Activated T-helper 1 cell treated with anti-CD3 and anti-CD28 coated beads, Interleukin-12 subunit alpha, Interleukin-12 subunit beta, Interleukin-2, Interleukin-4 antibody, amounts not matched to agents 30 ng/mL and 10 ng/mL and 1 ng/mL, durations not matched to agents 14 hours and 24 hours and 36 hours (primary cell): ENCODE measurements at regions of chr5 and their contacts with region 1.

Region 1: DNA sequence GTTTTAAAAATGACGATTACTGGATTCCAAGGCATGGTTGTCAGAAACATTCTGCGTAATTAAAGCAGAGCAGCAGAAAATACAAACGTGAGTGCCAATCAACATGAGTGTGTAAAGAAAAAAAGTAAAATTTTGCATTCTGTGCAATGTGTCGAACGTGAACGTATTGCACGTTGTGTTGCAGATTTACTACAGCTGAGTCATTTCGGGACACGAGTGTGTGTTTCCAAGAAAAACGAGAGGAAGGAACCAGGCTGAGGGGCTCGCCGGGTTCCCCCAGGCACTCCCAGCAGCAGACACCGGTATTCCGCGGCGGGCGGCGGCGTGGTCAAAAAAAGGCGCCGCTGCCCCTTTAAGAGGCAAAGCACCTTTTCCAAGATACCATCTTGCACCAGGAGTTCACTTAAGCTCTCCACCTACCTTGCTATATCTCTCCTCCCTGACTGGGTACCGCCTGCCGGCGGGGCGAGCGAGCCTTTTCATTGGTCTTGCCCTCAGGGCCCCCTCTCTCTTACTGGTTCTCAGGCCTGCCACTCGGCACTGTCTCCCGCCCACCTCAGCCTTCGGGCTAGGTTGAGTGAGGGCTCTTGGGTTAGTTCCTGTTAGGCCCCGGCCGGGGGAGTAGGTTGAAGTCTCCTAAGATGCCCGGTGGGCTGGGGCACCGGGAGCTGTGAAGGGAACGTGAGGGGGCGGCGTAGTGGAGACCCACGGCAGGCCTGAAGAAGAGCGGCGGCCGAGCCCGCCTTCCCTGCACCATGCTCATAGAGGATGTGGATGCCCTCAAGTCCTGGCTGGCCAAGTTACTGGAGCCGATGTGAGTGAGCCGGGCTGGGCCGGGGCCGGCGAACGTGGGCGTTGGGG is at the start of gene RBM27:
- DNase-seq: peak; percentile 97
- H3K4me3 Mint-ChIP-seq: no peak within 1 kb of the TSS
- H3K27ac Mint-ChIP-seq: no peak within 1 kb of the TSS
- H3K4me1 Mint-ChIP-seq: no peaks in the 10 kb centered on the region
- H3K27me3 Mint-ChIP-seq: no peaks in the 10 kb centered on the region
- total RNA-seq, gene RBM27: 31.2 and 33.5 TPM in 2 replicates

Region 2: GRCh38 chr5:145936401-145937131 is 266.7 kb before region 1 on chr5 and contains the start of gene SH3RF2:
- intact Hi-C with region 1: loop called (anchors 2 kb)
- DNase-seq: peak; percentile 26
- H3K4me3 Mint-ChIP-seq: peak within 1 kb of the TSS; percentile 72
- H3K27ac Mint-ChIP-seq: peak within 1 kb of the TSS; percentile 52
- H3K4me1 Mint-ChIP-seq: peaks cover 42% of the 10 kb centered on the region
- H3K27me3 Mint-ChIP-seq: peaks cover 51% of the 10 kb centered on the region
- total RNA-seq, gene SH3RF2: 0.18 TPM in 1 of 2 replicates, not detected in the other

Region 3: DNA sequence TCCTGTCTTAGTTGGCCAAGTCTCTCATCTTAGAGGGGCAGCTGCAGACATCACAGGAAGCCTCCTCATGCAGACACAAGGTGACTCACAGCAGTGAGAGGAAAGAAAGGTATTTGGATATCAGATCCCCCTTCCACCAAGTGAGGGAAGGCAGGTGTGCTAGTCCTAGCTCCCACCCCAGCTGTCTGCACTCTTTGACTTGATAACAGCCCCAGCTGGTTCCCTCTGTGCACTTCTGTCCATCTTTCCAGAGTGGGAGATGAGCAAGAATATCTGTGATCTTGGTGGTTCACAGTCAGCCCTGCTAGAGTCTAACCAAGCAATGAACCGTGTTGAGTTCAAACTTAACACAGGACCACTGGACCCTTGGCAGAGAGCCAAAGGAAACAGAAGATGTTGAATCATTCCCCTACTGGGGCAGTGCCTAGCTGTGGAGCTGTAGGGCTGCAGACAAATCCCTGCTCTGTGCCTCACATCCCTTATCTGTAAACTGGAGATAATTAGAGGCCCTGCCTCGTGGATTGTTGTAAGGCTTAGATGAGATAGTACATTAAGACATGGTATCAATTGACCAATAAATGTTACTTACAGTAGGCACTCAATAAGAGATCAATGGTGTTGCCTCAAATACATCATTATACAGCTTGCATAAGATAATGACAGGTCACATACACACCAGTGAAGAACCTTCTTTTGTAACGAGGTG is 227.7 kb before region 1 on chr5:
- intact Hi-C with region 1: no loop called
- DNase-seq: no peak
- H3K4me3 Mint-ChIP-seq: no peak overlapping the region
- H3K27ac Mint-ChIP-seq: no peak overlapping the region
- H3K4me1 Mint-ChIP-seq: no peaks in the 10 kb centered on the region
- H3K27me3 Mint-ChIP-seq: peaks cover 2% of the 10 kb centered on the region

Region 4: DNA sequence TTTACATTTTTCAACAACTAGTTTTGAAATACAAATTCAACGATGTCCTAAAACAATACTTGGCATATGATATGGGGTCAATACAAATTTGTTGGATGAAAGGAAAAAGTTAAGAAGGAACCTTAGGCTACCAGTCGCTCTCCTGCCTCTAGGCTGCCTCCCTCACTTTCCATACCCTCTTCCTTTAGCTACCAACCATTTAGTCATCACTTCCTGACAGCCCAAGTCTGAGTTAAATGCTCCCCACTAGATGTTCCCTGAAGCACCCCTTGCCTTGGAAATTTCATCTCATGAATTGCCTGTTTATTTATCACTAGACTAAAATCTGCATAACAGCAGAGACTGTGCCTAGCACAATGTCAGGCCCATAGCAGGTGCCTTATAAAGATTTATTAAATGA is 18.1 kb before region 1 on chr5:
- intact Hi-C with region 1: loop called (anchors 1 kb)
- DNase-seq: no peak
- H3K4me3 Mint-ChIP-seq: peak overlapping the region; percentile 20
- H3K27ac Mint-ChIP-seq: peak overlapping the region; percentile 56
- H3K4me1 Mint-ChIP-seq: peaks cover 9% of the 10 kb centered on the region
- H3K27me3 Mint-ChIP-seq: peaks cover 7% of the 10 kb centered on the region

Region 5: DNA sequence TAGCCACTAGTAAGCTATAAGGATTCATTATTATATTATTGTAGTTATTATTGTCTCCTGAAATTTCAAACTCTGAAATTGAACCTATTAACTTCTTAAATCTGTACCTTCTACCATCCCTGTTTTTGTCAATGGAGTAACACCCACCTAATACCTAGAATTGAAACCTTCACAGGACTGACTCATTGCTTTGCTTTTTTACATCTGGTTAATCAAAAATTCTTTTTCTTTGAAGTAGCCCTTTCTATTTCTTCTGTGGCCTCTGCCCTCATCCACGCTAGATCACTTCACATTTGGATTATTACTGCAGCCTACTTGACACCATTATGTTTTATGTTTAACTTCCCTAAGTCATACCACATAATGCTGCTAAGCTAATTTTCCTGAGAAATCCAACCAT is 35.7 kb after region 1 on chr5:
- intact Hi-C with region 1: loop called (anchors 2 kb)
- DNase-seq: no peak
- H3K4me3 Mint-ChIP-seq: no peak overlapping the region
- H3K27ac Mint-ChIP-seq: peak overlapping the region; percentile 59
- H3K4me1 Mint-ChIP-seq: peaks cover 8% of the 10 kb centered on the region
- H3K27me3 Mint-ChIP-seq: no peaks in the 10 kb centered on the region

Region 6: GRCh38 chr5:147822686-147823491 is 1619.6 kb after region 1 on chr5:
- intact Hi-C with region 1: no loop called
- DNase-seq: peak; percentile 16
- H3K4me3 Mint-ChIP-seq: no peak overlapping the region
- H3K27ac Mint-ChIP-seq: no peak overlapping the region
- H3K4me1 Mint-ChIP-seq: no peaks in the 10 kb centered on the region
- H3K27me3 Mint-ChIP-seq: peaks cover 11% of the 10 kb centered on the region